ENCODE measurements at regions of chr2 and their contacts with region 1.

Region 1: GRCh38 chr2:218269899-218270720 is at the starts of genes AAMP and PNKD:
- DNase-seq: peak; percentile 100
- H3K4me3 ChIP-seq: peak within 1 kb of the TSS; percentile 97
- H3K27ac ChIP-seq: peak within 1 kb of the TSS; percentile 44
- H3K4me1 ChIP-seq: peaks cover 23% of the 10 kb centered on the region
- CTCF ChIP-seq: 0 out of 2 replicates have a peak, but pooled peaks have one; percentile 24
- total RNA-seq, gene AAMP: 97.0 and 136 TPM in 2 replicates
- total RNA-seq, gene PNKD: 65.9 and 66.3 TPM in 2 replicates

Region 2: GRCh38 chr2:218186355-218186766 is 83.7 kb before region 1 on chr2:
- CTCF ChIA-PET with region 1: no interaction called
- POLR2A ChIA-PET with region 1: interaction called, 4 read pairs
- intact Hi-C with region 1: loop called (anchors 1 kb)
- DNase-seq: peak; percentile 79
- H3K4me3 ChIP-seq: no peak overlapping the region
- H3K27ac ChIP-seq: no peak overlapping the region
- H3K4me1 ChIP-seq: peaks cover 6% of the 10 kb centered on the region
- CTCF ChIP-seq: peak; percentile 93

Region 3: GRCh38 chr2:218286570-218287459 is 16.7 kb after region 1 on chr2:
- CTCF ChIA-PET with region 1: interaction called, 17 read pairs
- POLR2A ChIA-PET with region 1: interaction called, 35 read pairs
- intact Hi-C with region 1: loop called (anchors 1 kb)
- DNase-seq: peak; percentile 78
- H3K4me3 ChIP-seq: peak overlapping the region; percentile 59
- H3K27ac ChIP-seq: peak overlapping the region; percentile 59
- H3K4me1 ChIP-seq: peaks cover 63% of the 10 kb centered on the region
- CTCF ChIP-seq: no peak

Region 4: GRCh38 chr2:218301176-218301819 is 31.2 kb after region 1 on chr2:
- CTCF ChIA-PET with region 1: interaction called, 3 read pairs
- POLR2A ChIA-PET with region 1: no interaction called
- intact Hi-C with region 1: loop called (anchors 2 kb)
- DNase-seq: peak; percentile 95
- H3K4me3 ChIP-seq: no peak overlapping the region
- H3K27ac ChIP-seq: no peak overlapping the region
- H3K4me1 ChIP-seq: peaks cover 36% of the 10 kb centered on the region
- CTCF ChIP-seq: peak; percentile 96

Region 5: DNA sequence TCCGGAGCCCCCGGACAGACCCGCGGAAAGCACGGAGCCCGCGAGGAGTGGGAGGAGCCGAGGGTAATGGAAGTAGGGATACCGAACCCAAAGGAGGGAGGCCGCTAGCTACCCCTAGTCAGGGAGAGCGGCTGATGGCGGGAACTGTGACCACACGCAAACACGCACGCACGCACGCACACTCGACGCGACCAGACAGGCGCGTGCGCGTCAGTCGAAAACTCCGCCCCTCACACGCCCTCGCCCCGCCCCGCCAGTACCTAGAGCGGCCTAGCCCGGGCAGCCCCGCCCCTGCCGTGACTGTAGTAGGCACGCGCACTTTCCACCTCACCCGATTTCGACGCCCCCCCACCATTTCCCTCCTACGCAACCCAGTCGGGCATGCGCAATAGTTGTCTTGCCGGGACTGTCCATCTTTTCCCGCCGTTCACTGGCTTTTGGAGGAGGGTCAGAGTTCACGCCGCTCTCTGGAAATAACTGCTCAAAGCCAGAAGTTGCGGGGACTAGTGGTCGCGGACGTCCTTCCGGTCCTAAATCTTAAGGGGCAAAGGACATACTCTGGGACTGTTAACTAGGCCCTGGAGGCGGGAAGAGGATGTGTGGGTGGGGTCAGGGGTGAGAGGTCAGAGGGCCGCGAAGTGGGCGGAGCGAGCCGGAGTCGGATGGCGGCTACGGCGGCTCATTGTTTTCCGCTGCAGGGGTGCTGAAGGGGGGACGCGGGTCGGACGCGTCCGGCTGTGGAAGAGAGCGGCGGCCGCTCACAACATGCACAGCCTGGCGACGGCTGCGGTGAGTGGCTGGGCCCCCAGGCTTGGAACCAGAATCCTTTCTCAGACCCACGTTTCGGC is 298.3 kb after region 1 on chr2 and contains the starts of genes CNOT9 and USP37:
- CTCF ChIA-PET with region 1: no interaction called
- POLR2A ChIA-PET with region 1: no interaction called
- intact Hi-C with region 1: loop called (anchors 1 kb)
- DNase-seq: peak; percentile 99
- H3K4me3 ChIP-seq: peak within 1 kb of the TSS; percentile 93
- H3K27ac ChIP-seq: peak within 1 kb of the TSS; percentile 89
- H3K4me1 ChIP-seq: peaks cover 31% of the 10 kb centered on the region
- CTCF ChIP-seq: no peak
- total RNA-seq, gene CNOT9: 67.8 and 71.6 TPM in 2 replicates
- total RNA-seq, gene USP37: 23.3 and 31.4 TPM in 2 replicates

Measured in OCI-LY7 (cell line).